ENCODE measurements at regions of chr6 and their contacts with region 1.

Region 1: GRCh38 chr6:31952140-31952805 is 6.4 kb downstream of the CFB start:
- DNase-seq: peak; percentile 30
- H3K4me3 ChIP-seq: no peak overlapping the region
- H3K27ac ChIP-seq: no peak overlapping the region
- H3K27me3 ChIP-seq: no peaks in the 10 kb centered on the region
- CTCF ChIP-seq: peak; percentile 87

Region 2: DNA sequence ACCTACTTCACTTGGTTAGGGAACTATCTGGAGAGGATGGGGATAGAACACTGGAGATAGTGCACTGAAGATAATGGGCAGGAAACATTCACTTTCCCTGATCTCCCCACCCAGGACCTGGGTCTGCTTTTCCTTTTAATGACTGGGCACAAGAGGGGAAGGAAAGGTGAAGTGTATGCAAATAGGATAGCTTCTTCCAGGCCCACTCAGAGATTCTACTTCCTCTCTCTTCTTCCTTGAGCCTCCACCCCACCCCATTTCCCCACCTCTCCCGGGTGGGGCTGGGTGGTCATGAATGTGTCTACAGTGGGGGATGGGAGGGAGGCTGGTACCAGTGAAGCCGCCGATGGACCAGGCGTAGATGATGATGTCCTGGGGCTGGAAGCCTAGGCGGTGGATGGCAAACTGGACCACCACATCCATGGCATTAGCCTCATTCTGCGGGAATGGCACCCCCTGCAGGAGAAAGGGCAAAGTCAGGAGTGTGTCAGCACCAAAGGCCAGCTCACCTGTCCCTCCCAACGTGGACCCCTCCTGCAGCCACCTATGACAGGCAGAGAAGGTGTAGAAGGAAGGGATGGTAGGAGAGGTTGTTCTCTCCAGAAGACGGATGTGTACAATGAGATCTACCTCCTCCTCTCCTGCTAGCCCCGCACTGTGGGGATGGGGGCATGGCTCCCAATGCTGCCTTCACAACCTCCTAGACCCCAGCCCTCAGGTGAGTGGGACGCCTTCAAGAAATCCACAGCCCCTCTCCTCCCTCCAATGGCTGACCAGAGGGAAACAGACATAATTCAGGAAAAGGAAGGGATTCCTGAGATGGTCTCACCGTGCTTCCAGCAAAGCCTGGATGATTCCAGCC is 262.8 kb before region 1 on chr6:
- CTCF ChIA-PET with region 1: no interaction called
- POLR2A ChIA-PET with region 1: no interaction called
- DNase-seq: no peak
- H3K4me3 ChIP-seq: no peak overlapping the region
- H3K27ac ChIP-seq: no peak overlapping the region
- H3K27me3 ChIP-seq: no peaks in the 10 kb centered on the region
- CTCF ChIP-seq: peak; percentile 46

Region 3: DNA sequence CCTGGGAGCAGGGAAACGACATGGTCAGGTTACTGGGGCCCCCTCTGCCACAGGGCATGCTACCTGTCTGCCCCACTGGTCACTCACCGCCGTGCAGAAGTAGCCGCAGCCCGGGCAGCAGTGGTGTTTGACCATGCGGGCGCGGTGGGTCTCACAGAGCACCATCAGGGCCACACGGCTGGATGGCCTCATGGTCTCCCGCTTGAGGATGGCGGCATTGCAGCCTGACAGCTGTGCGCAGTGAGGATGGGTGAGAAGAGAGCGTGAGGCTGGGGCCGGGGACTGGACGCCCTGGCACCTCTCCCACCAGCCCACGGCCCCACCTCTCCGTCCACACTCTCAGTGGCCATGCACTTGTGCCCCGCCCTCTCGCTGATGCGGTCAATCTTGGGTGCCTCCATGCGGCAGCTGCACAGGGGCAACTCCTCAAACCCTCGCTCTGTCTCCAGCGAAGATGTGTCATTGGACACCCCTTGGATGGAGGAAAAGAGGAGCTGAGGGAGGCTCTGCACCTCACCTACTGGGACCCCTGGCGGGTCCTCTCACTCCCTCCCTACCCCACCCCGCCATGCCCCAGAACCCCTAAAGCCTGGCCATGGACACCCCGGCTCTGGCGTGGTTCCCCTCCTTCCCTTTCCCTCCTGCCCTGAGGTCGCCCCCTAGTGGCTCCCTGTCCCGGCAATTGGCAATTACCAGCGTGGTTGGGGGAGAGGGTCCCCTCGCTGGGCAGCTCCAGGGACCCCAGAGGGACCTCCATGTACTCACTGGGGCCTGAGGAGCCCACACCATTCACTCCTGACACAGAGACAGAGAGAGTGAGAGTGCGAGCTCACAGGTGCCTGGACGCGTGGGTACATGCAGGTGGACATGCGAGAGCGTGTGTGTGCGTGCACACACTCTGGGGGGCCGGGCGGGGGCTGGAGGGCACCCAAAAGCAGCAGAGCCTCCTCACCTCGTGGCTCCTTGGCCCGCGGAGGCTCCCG is 63.7 kb before region 1 on chr6:
- CTCF ChIA-PET with region 1: interaction called, 21 read pairs
- POLR2A ChIA-PET with region 1: interaction called, 3 read pairs
- DNase-seq: no peak
- H3K4me3 ChIP-seq: no peak overlapping the region
- H3K27ac ChIP-seq: no peak overlapping the region
- H3K27me3 ChIP-seq: no peaks in the 10 kb centered on the region
- CTCF ChIP-seq: peak; percentile 74

Region 4: DNA sequence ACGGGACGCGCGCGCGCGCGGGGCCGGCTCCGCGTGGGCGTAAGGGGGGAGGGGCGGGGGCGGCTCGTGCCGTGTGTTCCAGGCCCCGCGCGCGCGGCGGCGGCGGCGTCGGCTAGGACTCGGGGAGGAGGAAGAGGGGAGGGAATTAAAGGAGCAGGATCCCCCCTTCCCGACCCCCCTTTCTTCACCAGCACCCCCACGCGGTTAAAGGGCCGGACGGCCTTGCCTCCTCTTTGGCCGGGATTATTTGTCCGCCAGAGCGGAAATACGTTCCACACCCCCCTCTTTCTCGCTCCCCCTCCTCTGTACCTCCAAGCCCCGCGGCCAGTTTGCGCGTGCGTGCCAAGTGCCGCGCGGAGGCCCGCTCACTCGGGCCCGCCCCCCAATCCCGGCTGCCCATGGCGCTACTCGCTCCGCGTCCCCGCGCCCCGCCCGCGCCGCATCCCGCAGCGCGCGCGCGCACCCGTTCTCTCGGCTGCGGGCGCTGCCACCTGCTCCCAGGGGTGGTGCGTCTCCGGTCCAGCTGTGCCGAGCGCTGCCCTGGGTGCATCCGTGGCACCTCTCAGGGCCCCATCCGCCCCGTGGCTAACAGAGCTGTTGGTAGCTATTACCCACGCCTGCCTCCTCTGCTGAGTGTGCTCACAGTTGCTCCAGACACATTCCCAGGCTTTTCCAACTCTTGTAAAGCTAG is 50.2 kb before region 1 on chr6 and contains the start of gene ZBTB12:
- CTCF ChIA-PET with region 1: interaction called, 44 read pairs
- POLR2A ChIA-PET with region 1: interaction called, 3 read pairs
- DNase-seq: peak; percentile 96
- H3K4me3 ChIP-seq: peak within 1 kb of the TSS; percentile 70
- H3K27ac ChIP-seq: peak within 1 kb of the TSS; percentile 43
- H3K27me3 ChIP-seq: no peaks in the 10 kb centered on the region
- CTCF ChIP-seq: no peak
- polyA plus RNA-seq, gene ZBTB12: 2.4 and 4.3 TPM in 2 replicates

Region 5: GRCh38 chr6:31908791-31909190 is 43.5 kb before region 1 on chr6:
- CTCF ChIA-PET with region 1: interaction called, 29 read pairs
- POLR2A ChIA-PET with region 1: interaction called, 4 read pairs
- DNase-seq: peak; percentile 76
- H3K4me3 ChIP-seq: no peak overlapping the region
- H3K27ac ChIP-seq: peak overlapping the region; percentile 65
- H3K27me3 ChIP-seq: no peaks in the 10 kb centered on the region
- CTCF ChIP-seq: no peak

Region 6: GRCh38 chr6:31940256-31940664 is 12.0 kb before region 1 on chr6:
- CTCF ChIA-PET with region 1: interaction called, 16 read pairs
- POLR2A ChIA-PET with region 1: interaction called, 3 read pairs
- DNase-seq: no peak
- H3K4me3 ChIP-seq: no peak overlapping the region
- H3K27ac ChIP-seq: no peak overlapping the region
- H3K27me3 ChIP-seq: no peaks in the 10 kb centered on the region
- CTCF ChIP-seq: no peak; the same call in 1 of the 2 replicates

Region 7: DNA sequence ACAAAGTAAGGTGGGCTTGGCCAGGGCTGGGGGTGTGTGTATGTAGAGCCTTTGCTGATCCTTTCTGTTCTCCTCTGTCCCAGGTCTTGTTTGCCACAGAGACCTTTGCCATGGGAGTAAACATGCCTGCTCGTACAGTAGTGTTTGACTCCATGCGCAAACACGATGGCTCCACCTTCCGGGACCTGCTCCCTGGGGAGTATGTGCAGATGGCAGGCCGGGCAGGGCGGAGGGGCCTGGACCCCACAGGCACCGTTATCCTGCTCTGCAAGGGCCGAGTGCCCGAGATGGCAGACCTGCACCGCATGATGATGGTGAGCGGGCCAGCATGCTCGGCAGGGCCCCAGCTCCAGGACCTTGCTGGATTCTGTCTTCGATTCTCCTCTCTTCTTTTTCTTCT is 13.4 kb after region 1 on chr6:
- CTCF ChIA-PET with region 1: interaction called, 10 read pairs
- POLR2A ChIA-PET with region 1: no interaction called
- DNase-seq: no peak
- H3K4me3 ChIP-seq: no peak overlapping the region
- H3K27ac ChIP-seq: no peak overlapping the region
- H3K27me3 ChIP-seq: no peaks in the 10 kb centered on the region
- CTCF ChIP-seq: no peak

Measured in AG04450 (cell line).